Natural killer cell (primary cell): ENCODE measurements at regions of chr9 and their contacts with region 1.

Region 1: DNA sequence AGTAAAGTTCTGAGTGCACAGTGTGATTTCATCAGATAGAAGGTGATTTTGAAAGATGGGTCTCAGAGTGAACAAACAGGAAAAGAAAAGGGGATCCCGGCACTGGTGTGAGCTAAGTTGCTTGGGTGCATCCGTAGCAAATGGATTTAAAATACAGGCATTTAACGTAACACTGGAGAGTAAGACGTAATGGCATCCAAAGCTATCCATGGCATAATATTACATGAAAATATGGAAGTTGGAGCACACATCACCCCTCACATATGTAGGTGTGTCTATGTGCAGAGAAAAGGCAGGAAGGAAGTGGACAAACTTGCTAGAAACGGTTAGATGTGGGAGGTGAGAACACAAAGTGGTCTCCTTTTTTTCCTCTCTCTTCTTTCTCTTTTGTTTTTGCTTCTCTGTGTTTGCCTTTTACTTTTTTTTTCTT is 38.2 kb upstream of the SEMA4D start:
- DNase-seq: peak in 1 of 2 donors; percentile 79
- ATAC-seq: peak; percentile 79 to 90 (median 86)
- H3K4me3 ChIP-seq: no peak overlapping the region
- H3K4me3 Mint-ChIP-seq: peak overlapping the region; percentile 74
- H3K27ac ChIP-seq: peak overlapping the region; percentile 93
- H3K27ac Mint-ChIP-seq: peak overlapping the region; percentile 85 to 98
- H3K4me1 ChIP-seq: peaks cover 88% of the 10 kb centered on the region
- H3K4me1 Mint-ChIP-seq: peaks cover 90 to 92% of the 10 kb centered on the region in 2 donors
- H3K27me3 ChIP-seq: no peaks in the 10 kb centered on the region
- H3K27me3 Mint-ChIP-seq: no peaks in the 10 kb centered on the region
- CTCF ChIP-seq: no peak

Region 2: GRCh38 chr9:89234205-89235067 is 301.7 kb before region 1 on chr9:
- intact Hi-C with region 1: no loop called
- DNase-seq: peak in 1 of 2 donors; percentile 22
- ATAC-seq: peak in 1 of 3 donors; percentile 67
- H3K4me3 ChIP-seq: no peak overlapping the region
- H3K4me3 Mint-ChIP-seq: peak overlapping the region; percentile 1
- H3K27ac ChIP-seq: no peak overlapping the region
- H3K27ac Mint-ChIP-seq: no peak overlapping the region
- H3K4me1 ChIP-seq: no peaks in the 10 kb centered on the region
- H3K4me1 Mint-ChIP-seq: peaks cover 11 to 14% of the 10 kb centered on the region in 2 donors
- H3K27me3 ChIP-seq: peaks cover 13% of the 10 kb centered on the region
- H3K27me3 Mint-ChIP-seq: peaks cover 24 to 65% of the 10 kb centered on the region in 2 donors
- CTCF ChIP-seq: no peak

Region 3: DNA sequence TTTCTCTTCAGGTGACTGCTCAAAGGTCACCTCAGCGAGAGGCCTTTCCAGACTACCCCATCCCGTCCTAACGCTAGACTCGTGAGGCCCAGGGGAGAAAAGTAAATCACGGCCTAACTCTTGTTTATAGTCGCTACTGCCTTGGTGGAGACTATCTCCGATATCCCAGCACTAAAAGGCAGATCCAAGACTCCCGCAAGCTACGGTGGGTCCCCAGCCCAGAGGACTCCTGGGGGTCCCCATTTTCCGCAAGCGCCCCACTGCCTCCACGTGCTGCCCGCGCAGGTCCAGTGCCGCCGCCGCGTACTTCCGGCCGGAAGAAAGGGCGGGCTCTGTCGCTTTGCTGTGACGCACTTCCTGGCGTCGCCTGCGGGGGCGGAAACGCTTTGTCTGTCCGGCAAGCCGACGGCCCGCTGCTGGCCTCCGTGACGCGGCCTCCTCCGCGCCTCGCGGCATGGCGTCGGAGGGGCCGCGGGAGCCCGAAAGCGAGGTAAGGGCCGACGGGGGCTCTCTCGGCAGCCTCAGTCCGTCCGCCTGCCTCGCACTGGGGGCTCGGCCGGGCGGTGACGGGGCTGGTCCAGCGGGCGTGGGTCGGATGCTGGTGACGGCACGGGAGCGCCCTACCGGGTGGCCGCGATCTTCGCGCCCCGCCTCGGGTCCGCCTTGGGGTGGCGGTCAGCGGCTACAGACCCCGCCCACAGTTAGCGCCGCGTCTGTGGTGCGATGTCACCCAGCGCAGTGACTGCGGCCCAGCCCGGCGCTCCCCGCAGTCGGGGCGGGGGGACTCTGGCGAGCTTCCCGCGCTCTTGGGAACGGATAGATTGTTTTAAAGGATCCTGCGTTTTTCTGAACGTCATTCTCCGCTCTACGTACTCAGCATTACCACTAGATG is 217.8 kb before region 1 on chr9 and contains the start of gene SECISBP2:
- intact Hi-C with region 1: loop called (anchors 2 kb)
- DNase-seq: peak; percentile 96
- ATAC-seq: peak; percentile 87 to 98 (median 92)
- H3K4me3 ChIP-seq: peak within 1 kb of the TSS; percentile 54
- H3K4me3 Mint-ChIP-seq: peak within 1 kb of the TSS; percentile 96
- H3K27ac ChIP-seq: peak within 1 kb of the TSS; percentile 84
- H3K27ac Mint-ChIP-seq: peak within 1 kb of the TSS; percentile 94 to 98
- H3K4me1 ChIP-seq: peaks cover 16% of the 10 kb centered on the region
- H3K4me1 Mint-ChIP-seq: peaks cover 34 to 38% of the 10 kb centered on the region in 2 donors
- H3K27me3 ChIP-seq: no peaks in the 10 kb centered on the region
- H3K27me3 Mint-ChIP-seq: no peaks in the 10 kb centered on the region
- CTCF ChIP-seq: peak; percentile 66
- total RNA-seq, gene SECISBP2: 79.5 to 95.8 (median 88.7) TPM

Region 4: GRCh38 chr9:89448381-89448780 is 87.8 kb before region 1 on chr9:
- intact Hi-C with region 1: loop called (anchors 5 kb)
- DNase-seq: peak; percentile 60 to 70
- ATAC-seq: peak; percentile 80 to 87 (median 85)
- H3K4me3 ChIP-seq: no peak overlapping the region
- H3K4me3 Mint-ChIP-seq: peak overlapping the region; percentile 79
- H3K27ac ChIP-seq: peak overlapping the region; percentile 32
- H3K27ac Mint-ChIP-seq: peak overlapping the region; percentile 93
- H3K4me1 ChIP-seq: peaks cover 71% of the 10 kb centered on the region
- H3K4me1 Mint-ChIP-seq: peaks cover 75 to 96% of the 10 kb centered on the region in 2 donors
- H3K27me3 ChIP-seq: no peaks in the 10 kb centered on the region
- H3K27me3 Mint-ChIP-seq: no peaks in the 10 kb centered on the region
- CTCF ChIP-seq: no peak